ENCODE measurements at regions of chr13 and their contacts with region 1.

Region 1: GRCh38 chr13:70363991-70364390 is 255.7 kb upstream of the KLHL1 start:
- DNase-seq: no peak
- H3K4me3 ChIP-seq: no peak overlapping the region
- H3K27ac ChIP-seq: no peak overlapping the region
- H3K4me1 ChIP-seq: no peaks in the 10 kb centered on the region
- H3K27me3 ChIP-seq: no peaks in the 10 kb centered on the region
- CTCF ChIP-seq: no peak
- EP300 ChIP-seq: no peak
- POLR2A ChIP-seq: no peak

Region 2: GRCh38 chr13:70353096-70353495 is 10.9 kb before region 1 on chr13:
- intact Hi-C with region 1: loop called in 1 of 4 experiments (anchors 1 kb)
- DNase-seq: no peak
- H3K4me3 ChIP-seq: no peak overlapping the region
- H3K27ac ChIP-seq: no peak overlapping the region
- H3K4me1 ChIP-seq: no peaks in the 10 kb centered on the region
- H3K27me3 ChIP-seq: no peaks in the 10 kb centered on the region
- CTCF ChIP-seq: no peak
- EP300 ChIP-seq: no peak
- POLR2A ChIP-seq: no peak